GM10248 (cell line): ENCODE measurements at regions of chr13 and their contacts with region 1.

Region 1: DNA sequence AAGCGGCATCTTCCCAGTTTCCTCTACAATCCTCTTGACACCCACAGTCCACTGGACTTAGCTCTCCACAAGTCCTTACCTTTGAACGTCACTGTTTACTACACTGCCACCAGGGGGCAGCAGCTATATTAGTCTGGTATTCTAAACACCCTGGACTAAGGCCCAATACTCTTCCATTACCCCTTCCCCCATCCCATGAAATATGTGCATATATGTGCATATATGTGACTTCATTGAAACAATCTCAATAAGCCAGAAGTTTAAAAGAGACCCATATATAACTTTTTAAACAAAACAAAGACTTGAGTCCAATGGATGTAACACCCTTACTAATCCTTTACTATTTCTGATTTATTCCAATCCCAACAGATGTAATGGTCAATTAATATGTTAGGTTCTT is 15.5 kb downstream of the GGACT start:
- DNase-seq: peak; percentile 69
- CTCF ChIP-seq: peak; percentile 85

Region 2: DNA sequence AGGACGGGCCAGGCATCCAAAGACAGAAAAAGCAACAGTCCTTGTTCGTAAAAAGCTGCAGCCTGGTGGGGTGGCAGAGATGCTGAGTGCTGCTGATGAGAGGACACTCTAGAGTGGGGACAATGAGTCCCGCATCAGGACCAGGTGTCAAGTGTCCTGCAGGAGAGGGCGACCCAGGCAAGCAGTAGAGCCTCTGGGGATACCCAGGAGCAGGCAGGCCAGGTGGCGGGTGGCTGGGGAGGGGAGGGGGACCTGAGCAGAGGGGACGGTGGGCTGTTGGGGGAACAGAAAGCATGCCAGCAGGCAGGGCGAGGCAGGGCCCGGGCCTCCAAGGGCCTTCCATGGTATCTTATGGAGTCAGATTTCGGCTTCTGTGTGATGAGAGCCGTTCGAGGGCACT is 20.4 kb before region 1 on chr13:
- CTCF ChIA-PET with region 1: interaction called, 11 read pairs
- POLR2A ChIA-PET with region 1: no interaction called
- DNase-seq: no peak
- CTCF ChIP-seq: no peak

Region 3: DNA sequence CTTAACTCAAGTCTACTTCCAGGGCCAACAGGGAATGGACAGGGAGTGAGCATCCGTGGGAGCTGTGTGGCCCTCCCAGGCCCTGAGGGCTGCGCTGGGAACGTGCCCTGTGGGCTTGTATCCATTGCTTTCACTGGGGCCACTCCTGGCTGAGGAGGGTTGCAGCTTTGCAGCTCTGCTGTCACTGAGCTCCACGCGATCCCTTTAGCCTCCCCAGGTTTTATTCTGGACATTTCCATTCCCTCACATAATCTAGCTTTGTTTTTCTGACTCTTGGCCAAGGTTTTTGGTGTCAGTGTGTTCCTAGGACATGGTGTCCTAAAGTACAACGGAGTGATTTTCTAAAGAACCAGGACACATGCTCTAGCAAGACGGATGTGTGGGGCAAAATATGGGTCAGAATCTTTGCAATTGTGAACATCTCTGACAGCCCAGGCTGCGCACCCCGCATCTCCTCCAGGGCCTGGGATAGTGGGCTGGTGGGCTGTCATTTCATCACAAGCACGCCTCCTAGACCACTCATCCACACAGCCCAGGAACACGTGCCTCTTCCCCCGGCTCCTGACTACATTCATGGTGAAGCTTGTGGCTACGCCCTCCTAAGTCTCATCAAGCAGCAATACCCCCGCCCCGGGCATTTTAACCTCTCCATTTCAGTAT is 12.5 kb before region 1 on chr13:
- CTCF ChIA-PET with region 1: interaction called, 36 read pairs
- POLR2A ChIA-PET with region 1: no interaction called
- DNase-seq: no peak
- CTCF ChIP-seq: no peak

Region 4: DNA sequence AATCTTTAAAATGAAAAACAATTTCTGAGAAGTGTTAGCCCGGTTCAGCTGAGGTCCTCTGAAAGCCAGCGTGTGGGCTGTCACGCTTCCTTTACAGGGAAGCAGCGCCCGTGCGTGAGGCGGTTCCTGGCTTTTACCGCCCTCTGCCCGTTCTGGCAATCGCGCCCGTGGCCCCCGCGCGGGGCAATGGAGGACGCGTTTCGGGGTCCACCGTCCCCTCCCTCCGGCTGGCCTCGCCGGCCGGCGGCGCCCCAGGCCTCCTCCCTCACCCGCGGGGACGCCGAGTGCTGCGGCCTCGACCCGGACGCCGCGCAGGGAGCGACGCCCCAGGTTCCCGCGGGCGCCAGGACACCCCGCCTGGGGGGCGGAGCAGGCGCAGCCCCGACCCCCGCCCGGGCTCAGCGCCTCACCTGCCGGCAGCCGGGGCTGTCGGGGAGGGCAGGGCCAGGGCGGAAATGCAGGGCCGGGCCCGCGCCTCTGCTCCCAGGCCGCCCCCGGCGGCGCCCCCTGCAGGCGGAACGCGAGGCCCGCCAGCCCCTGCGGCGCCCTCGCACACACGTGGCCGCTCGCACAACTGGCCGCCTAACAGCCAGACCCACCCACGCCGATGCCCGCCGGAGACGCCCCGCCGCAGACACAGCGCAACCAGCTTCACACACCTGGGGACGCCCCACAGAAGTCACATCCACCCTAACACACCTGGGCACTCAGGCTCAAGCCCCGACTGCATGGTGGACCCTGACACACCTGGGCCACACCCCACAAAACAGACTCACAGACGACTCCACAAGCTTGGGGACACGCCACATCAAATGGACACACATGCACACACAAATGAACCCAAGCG is 15.4 kb after region 1 on chr13 and contains the start of gene GGACT:
- CTCF ChIA-PET with region 1: interaction called, 88 read pairs
- POLR2A ChIA-PET with region 1: interaction called, 3 read pairs
- DNase-seq: peak; percentile 93
- CTCF ChIP-seq: peak; percentile 89

Region 5: GRCh38 chr13:101120007-101120406 is 546.9 kb after region 1 on chr13:
- CTCF ChIA-PET with region 1: interaction called, 45 read pairs
- POLR2A ChIA-PET with region 1: no interaction called
- DNase-seq: no peak
- CTCF ChIP-seq: no peak

Region 6: DNA sequence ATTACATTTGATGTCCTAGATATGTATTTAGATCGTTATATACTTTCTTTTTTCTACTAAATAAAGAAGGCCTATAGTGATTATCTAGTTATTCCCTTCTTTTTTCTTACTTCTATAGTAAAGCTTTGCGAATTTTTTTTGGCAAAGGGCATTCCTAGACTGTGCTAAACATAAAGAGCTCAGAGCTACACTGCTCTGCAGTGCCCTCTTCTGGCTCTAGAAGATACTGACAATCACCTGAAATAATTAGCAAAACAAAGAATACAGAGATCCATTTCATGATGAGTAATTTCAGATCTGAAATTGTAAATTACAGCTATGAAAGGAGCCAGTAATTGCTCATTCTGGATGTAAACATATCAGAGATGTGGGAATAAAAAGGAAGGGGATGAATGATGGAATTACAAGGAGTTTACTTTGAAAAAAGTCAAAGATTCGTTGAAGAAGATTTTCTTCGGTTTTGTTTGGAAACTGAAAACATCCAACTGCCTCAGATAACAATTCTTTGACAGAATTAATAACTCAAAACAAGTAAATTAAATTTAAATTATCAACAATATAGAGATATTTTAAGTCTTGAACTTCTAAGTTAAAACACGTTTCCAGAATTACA is 554.7 kb after region 1 on chr13:
- CTCF ChIA-PET with region 1: interaction called, 45 read pairs
- POLR2A ChIA-PET with region 1: no interaction called
- DNase-seq: peak; percentile 54
- CTCF ChIP-seq: peak; percentile 81